Activated naive CD4-positive, alpha-beta T cell treated with anti-CD3 and anti-CD28 coated beads for 36 hours (primary cell): ENCODE measurements at regions of chr11 and their contacts with region 1.

Region 1: DNA sequence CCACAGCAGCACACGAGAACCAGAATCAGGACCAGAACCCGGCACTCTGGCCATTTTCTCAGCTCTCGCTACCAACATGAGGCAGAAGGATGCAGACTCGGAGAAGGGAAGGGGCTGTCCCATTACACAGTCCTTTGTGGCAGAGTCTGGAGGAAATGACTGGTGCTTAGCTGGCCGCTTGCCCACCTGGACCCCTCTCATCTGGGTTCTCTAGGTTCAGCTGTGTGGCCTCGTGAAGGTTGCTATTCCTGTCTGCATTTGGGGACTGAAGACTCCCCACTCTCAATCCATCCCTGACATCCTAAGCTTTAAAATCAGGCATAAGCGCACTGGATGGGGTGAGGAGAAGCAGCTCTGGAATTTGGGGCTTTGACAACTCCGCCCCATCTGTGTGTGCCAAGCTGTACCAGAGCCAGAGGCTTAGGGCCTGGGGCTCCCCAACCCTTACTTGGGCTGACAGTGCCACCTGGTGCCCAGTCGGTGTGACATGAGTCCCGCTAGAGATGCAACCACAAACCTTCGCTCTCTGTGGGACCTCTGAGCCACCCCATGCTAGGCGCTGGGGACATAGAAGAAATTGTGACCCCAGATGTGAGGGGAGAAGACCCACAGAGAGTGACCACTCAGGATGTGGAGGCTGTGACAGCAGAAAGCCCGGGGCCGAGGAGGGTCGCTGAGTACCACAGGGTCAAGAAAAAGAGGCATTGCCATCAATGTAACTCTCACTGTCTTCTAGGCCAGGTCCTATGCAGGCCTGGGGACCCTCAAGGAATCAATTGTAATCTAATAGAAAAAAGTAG is 35.9 kb upstream of the FCHSD2 start:
- DNase-seq: peak; percentile 90
- H3K4me3 Mint-ChIP-seq: no peak overlapping the region
- H3K27ac Mint-ChIP-seq: no peak overlapping the region
- H3K4me1 Mint-ChIP-seq: no peaks in the 10 kb centered on the region
- H3K27me3 Mint-ChIP-seq: no peaks in the 10 kb centered on the region

Region 2: GRCh38 chr11:72802822-72803221 is 375.2 kb before region 1 on chr11:
- CTCF ChIA-PET with region 1: no interaction called
- intact Hi-C with region 1: no loop called
- DNase-seq: no peak
- H3K4me3 Mint-ChIP-seq: no peak overlapping the region
- H3K27ac Mint-ChIP-seq: no peak overlapping the region
- H3K4me1 Mint-ChIP-seq: no peaks in the 10 kb centered on the region
- H3K27me3 Mint-ChIP-seq: no peaks in the 10 kb centered on the region

Region 3: GRCh38 chr11:72831513-72832300 is 346.3 kb before region 1 on chr11:
- CTCF ChIA-PET with region 1: interaction called, 61 read pairs
- intact Hi-C with region 1: loop called (anchors 1 kb)
- DNase-seq: peak; percentile 76
- H3K4me3 Mint-ChIP-seq: no peak overlapping the region
- H3K27ac Mint-ChIP-seq: peak overlapping the region; percentile 51
- H3K4me1 Mint-ChIP-seq: peaks cover 11% of the 10 kb centered on the region
- H3K27me3 Mint-ChIP-seq: no peaks in the 10 kb centered on the region

Region 4: GRCh38 chr11:72918851-72919250 is 259.1 kb before region 1 on chr11:
- CTCF ChIA-PET with region 1: interaction called, 66 read pairs
- intact Hi-C with region 1: loop called (anchors 1 kb)
- DNase-seq: no peak
- H3K4me3 Mint-ChIP-seq: no peak overlapping the region
- H3K27ac Mint-ChIP-seq: no peak overlapping the region
- H3K4me1 Mint-ChIP-seq: no peaks in the 10 kb centered on the region
- H3K27me3 Mint-ChIP-seq: no peaks in the 10 kb centered on the region

Region 5: DNA sequence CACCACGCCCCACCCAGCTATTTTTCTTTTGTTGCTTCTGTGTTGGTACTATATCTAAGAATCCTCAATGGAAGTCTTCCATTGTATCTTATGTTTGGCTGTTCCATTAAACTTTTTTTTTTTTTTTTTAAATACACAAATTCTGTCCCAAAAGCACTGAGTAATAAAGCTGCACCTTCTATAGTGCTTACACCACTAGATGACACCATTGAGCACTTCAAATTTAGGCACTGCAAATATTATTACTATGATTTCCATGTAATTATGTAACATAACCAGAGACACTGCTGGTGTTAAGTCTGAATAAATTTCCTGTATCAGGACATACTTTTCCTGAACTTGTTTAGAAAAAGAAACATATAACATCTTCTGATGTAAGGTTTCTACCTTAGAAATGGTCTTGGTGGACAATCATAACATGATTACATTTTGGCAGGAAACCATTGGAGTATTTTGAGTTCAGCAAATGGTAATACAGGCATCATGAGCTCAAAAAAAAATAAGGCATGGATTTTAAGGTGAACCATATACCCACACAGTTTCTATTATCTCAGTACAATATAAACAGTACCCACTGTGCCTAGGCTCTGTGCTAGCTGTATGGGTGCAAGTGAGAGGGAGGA is 253.3 kb before region 1 on chr11:
- CTCF ChIA-PET with region 1: interaction called, 66 read pairs
- intact Hi-C with region 1: loop called (anchors 1 kb)
- DNase-seq: no peak
- H3K4me3 Mint-ChIP-seq: no peak overlapping the region
- H3K27ac Mint-ChIP-seq: no peak overlapping the region
- H3K4me1 Mint-ChIP-seq: peaks cover 6% of the 10 kb centered on the region
- H3K27me3 Mint-ChIP-seq: no peaks in the 10 kb centered on the region

Region 6: GRCh38 chr11:73157053-73158010 is 20.6 kb before region 1 on chr11:
- CTCF ChIA-PET with region 1: interaction called, 45 read pairs
- intact Hi-C with region 1: no loop called
- DNase-seq: no peak
- H3K4me3 Mint-ChIP-seq: no peak overlapping the region
- H3K27ac Mint-ChIP-seq: no peak overlapping the region
- H3K4me1 Mint-ChIP-seq: peaks cover 52% of the 10 kb centered on the region
- H3K27me3 Mint-ChIP-seq: no peaks in the 10 kb centered on the region

Region 7: GRCh38 chr11:73164803-73165540 is 13.0 kb before region 1 on chr11:
- CTCF ChIA-PET with region 1: interaction called, 45 read pairs
- intact Hi-C with region 1: no loop called
- DNase-seq: no peak
- H3K4me3 Mint-ChIP-seq: no peak overlapping the region
- H3K27ac Mint-ChIP-seq: no peak overlapping the region
- H3K4me1 Mint-ChIP-seq: no peaks in the 10 kb centered on the region
- H3K27me3 Mint-ChIP-seq: no peaks in the 10 kb centered on the region

Region 8: GRCh38 chr11:73218106-73218829 is 40.3 kb after region 1 on chr11 and contains the start of gene P2RY2:
- CTCF ChIA-PET with region 1: no interaction called
- intact Hi-C with region 1: no loop called
- DNase-seq: peak; percentile 52
- H3K4me3 Mint-ChIP-seq: peak within 1 kb of the TSS; percentile 49
- H3K27ac Mint-ChIP-seq: no peak within 1 kb of the TSS
- H3K4me1 Mint-ChIP-seq: peaks cover 4% of the 10 kb centered on the region
- H3K27me3 Mint-ChIP-seq: peaks cover 15% of the 10 kb centered on the region
- total RNA-seq, gene P2RY2: not detected